Activated CD8-positive, alpha-beta memory T cell treated with anti-CD3 and anti-CD28 coated beads, Interleukin-2, amount 10 ng/mL, durations not matched to agents 7 days and 5 days (primary cell): ENCODE measurements at regions of chr15 and their contacts with region 1.

Region 1: DNA sequence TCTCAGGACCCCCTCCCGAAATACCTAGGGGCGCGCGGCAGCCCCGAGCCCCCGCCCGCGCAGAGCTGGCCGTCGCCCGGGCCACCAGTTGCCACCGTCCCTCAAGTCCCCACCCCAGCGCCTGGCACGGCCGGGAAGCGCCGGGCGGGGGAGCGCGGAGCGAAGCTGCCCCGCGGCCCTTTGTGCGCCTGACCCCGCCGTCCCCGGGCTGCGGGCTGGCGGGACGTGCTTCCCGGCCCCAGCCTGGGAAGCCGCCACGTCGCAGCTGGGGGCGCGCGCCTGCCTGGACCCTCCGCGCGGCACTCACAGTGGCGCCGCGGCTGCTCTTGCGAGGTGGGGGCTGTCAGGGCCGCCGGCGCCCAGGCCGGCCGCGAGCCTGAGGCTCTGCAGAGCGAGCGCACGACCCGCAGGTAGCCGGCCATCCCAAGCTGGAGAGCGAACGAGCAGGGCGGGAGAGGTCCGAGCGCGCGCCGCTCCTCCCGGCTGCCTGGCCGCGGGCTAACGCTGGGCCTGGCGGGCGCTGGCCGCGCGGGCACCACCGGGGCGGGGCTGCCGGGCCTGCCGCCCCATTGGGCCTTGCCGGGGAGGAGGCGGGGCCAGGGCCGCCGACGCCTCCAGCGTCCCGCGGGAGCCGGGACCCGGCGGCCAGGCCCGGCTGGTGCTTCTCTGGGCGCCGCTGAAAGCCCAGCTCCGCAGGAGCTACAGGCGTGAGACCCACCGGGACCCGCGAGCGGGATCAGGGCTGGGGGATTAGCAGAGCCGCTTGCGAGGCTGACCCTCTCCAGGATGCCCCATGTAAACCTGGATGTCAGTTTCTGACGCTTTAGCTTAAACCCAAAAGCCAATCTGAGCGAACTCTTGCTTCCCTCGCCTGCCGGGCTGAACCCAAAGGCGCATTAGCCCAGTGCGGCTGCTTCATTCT is at the start of gene IDH2:
- DNase-seq: peak; percentile 80
- ATAC-seq: peak; percentile 84
- H3K4me3 Mint-ChIP-seq: peak within 1 kb of the TSS; percentile 79
- H3K27ac Mint-ChIP-seq: peak within 1 kb of the TSS; percentile 96
- H3K4me1 Mint-ChIP-seq: peaks cover 47% of the 10 kb centered on the region
- H3K27me3 Mint-ChIP-seq: peaks cover 4% of the 10 kb centered on the region
- total RNA-seq, gene IDH2: 196 to 293 TPM

Region 2: GRCh38 chr15:90086868-90087268 is 15.4 kb before region 1 on chr15:
- CTCF ChIA-PET with region 1: interaction called, 19 read pairs
- DNase-seq: peak; percentile 69
- ATAC-seq: peak; percentile 71
- H3K4me3 Mint-ChIP-seq: no peak overlapping the region
- H3K27ac Mint-ChIP-seq: no peak overlapping the region
- H3K4me1 Mint-ChIP-seq: peaks cover 14% of the 10 kb centered on the region
- H3K27me3 Mint-ChIP-seq: no peaks in the 10 kb centered on the region